Activated CD4-positive, alpha-beta memory T cell treated with anti-CD3 and anti-CD28 coated beads for 36 hours (primary cell): ENCODE measurements at regions of chr15 and their contacts with region 1.

Region 1: GRCh38 chr15:42920519-42921227 is at the start of gene TTBK2:
- DNase-seq: peak; percentile 98
- H3K4me3 Mint-ChIP-seq: peak within 1 kb of the TSS; percentile 99
- H3K27ac Mint-ChIP-seq: peak within 1 kb of the TSS; percentile 91
- H3K4me1 Mint-ChIP-seq: peaks cover 31% of the 10 kb centered on the region
- H3K27me3 Mint-ChIP-seq: no peaks in the 10 kb centered on the region
- total RNA-seq, gene TTBK2: 12.6 to 13.8 TPM

Region 2: GRCh38 chr15:42495361-42496212 is 425.1 kb before region 1 on chr15 and contains the start of gene SNAP23:
- CTCF ChIA-PET with region 1: interaction called, 3 read pairs
- POLR2A ChIA-PET with region 1: no interaction called
- intact Hi-C with region 1: loop called (anchors 10 kb)
- DNase-seq: peak; percentile 91
- H3K4me3 Mint-ChIP-seq: peak within 1 kb of the TSS; percentile 95
- H3K27ac Mint-ChIP-seq: peak within 1 kb of the TSS; percentile 88
- H3K4me1 Mint-ChIP-seq: peaks cover 67% of the 10 kb centered on the region
- H3K27me3 Mint-ChIP-seq: no peaks in the 10 kb centered on the region
- total RNA-seq, gene SNAP23: 43.1 to 46.8 TPM

Region 3: DNA sequence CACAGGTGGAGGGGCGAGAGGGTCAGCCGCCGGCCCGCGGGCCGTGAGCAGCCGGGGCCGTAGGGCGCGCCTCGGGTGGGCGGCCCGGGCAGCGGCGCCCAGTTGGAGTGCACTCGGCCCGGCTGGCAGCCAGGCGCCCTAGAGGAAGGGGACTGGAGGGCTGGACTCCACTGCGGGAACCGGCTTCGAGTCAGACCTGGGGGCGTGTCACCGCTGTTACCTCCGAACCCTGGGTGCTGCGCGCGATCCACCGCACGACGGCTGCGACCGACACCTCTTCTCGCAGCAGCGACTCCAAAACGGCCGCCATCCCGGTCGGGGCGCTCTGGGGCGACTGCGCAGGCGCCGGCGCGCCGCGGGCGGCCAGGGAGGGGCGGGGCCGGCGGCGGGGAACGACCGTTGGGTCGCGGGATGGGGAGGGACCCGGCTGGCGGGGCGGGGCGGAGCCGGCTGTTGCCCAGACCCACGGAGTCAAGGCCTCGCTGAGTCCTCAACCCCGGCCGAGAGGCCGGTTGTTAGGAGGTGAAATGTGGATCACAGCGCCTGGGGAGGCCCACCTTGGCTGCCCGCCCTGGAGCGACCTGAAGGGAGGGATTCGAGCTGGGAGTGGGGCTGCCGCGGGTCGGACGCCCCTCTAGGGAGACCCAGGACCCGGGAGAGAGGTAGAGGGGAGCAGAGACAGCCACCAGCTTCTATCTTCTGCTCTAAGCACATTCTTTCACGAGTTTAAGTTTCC is 183.7 kb before region 1 on chr15 and contains the start of gene CDAN1:
- CTCF ChIA-PET with region 1: no interaction called
- POLR2A ChIA-PET with region 1: interaction called, 3 read pairs
- intact Hi-C with region 1: loop called (anchors 10 kb)
- DNase-seq: peak; percentile 95
- H3K4me3 Mint-ChIP-seq: peak within 1 kb of the TSS; percentile 77
- H3K27ac Mint-ChIP-seq: peak within 1 kb of the TSS; percentile 54
- H3K4me1 Mint-ChIP-seq: peaks cover 18% of the 10 kb centered on the region
- H3K27me3 Mint-ChIP-seq: no peaks in the 10 kb centered on the region
- total RNA-seq, gene CDAN1: 20.9 to 21.0 TPM

Region 4: GRCh38 chr15:42800731-42801474 is 119.8 kb before region 1 on chr15:
- CTCF ChIA-PET with region 1: interaction called, 22 read pairs
- POLR2A ChIA-PET with region 1: no interaction called
- intact Hi-C with region 1: loop called (anchors 5 kb)
- DNase-seq: peak; percentile 12
- H3K4me3 Mint-ChIP-seq: no peak overlapping the region
- H3K27ac Mint-ChIP-seq: no peak overlapping the region
- H3K4me1 Mint-ChIP-seq: no peaks in the 10 kb centered on the region
- H3K27me3 Mint-ChIP-seq: no peaks in the 10 kb centered on the region

Region 5: GRCh38 chr15:42933886-42934667 is 13.4 kb after region 1 on chr15:
- CTCF ChIA-PET with region 1: no interaction called
- POLR2A ChIA-PET with region 1: no interaction called
- intact Hi-C with region 1: no loop called
- DNase-seq: no peak
- H3K4me3 Mint-ChIP-seq: no peak overlapping the region
- H3K27ac Mint-ChIP-seq: no peak overlapping the region
- H3K4me1 Mint-ChIP-seq: no peaks in the 10 kb centered on the region
- H3K27me3 Mint-ChIP-seq: no peaks in the 10 kb centered on the region